SK-N-SH (cell line): ENCODE measurements at regions of chr2 and their contacts with region 1.

Region 1: DNA sequence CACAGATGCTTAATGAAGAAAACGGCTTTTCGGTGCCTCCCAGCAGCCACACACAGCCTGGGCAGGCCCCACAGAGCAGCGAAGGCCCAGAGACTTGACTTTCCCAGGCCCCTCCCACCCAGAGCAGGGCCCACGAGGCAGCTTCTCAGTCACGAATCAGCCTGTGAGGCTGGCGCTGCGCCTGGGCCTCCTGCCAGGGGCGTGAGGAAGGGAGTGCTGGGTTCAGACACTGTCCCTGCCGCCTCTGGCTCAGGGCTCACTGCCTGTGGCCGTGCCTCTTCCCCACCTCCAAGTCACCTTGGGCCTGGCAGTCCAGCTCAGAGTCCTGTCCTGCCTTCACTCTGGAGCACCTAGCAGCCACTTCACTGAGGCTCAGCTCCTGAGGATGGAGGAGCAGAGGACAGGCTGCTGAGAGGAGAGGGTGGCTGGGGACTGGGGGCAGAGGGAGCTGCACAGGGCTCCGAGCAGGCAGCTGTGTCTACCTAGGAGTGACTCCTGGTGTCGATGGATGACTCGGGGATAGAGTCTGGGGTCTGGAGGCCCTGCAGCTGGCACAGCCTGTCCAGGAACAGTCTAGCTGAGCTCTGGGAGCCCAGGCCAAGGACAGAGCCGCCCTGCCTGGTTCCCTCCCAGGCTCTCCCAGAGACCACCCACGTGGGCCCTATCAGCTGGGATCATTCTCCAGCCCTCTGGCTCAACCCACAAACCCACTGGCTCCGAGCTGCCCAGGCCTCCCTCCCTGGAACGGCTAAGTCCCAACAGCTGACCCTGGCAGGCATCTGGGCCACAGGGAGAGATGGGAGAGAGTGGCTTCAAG is 36.4 kb upstream of the FOSL2 start:
- DNase-seq: peak; percentile 90
- H3K4me3 ChIP-seq: no peak overlapping the region
- H3K27ac ChIP-seq: peak overlapping the region; percentile 60 to 97
- H3K4me1 ChIP-seq: peaks cover 13 to 40% of the 10 kb centered on the region in 2 experiments; a peak in 3 of 4 replicates
- H3K27me3 ChIP-seq: no peaks in the 10 kb centered on the region
- CTCF ChIP-seq: no peak
- EP300 ChIP-seq: no peak
- RAD21 ChIP-seq: no peak; the same call in 1 of the 2 replicates

Region 2: DNA sequence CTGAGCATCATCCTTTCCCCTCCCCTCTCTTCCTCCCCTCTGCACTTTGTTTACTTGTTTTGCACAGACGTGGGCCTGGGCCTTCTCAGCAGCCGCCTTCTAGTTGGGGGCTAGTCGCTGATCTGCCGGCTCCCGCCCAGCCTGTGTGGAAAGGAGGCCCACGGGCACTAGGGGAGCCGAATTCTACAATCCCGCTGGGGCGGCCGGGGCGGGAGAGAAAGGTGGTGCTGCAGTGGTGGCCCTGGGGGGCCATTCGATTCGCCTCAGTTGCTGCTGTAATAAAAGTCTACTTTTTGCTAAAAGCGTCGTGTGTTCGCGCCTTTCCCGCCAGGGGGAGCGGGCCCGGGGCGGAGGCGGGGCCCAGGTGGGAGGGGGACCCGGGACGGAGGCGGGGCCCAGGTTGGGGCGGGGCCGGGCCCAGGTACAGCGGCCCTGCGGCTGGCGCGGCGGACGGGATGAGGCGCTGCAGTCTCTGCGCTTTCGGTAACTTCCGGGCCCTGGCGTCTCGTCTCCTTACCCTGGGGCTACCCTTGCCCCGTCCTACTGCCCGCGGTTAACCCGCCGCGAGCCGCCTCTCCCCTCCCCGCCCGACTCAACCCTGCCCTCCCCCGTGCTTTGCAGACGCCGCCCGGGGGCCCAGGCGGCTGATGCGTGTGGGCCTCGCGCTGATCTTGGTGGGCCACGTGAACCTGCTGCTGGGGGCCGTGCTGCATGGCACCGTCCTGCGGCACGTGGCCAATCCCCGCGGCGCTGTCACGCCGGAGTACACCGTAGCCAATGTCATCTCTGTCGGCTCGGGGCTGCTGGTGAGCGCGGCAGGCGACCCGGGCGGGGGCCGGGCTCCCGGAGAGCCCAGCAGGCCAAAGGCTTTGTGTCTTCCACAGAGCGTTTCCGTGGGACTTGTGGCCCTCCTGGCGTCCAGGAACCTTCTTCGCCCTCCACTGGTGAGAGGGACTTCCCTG is 914.1 kb before region 1 on chr2 and contains the start of gene KRTCAP3:
- CTCF ChIA-PET with region 1: no interaction called
- POLR2A ChIA-PET with region 1: no interaction called
- DNase-seq: peak; percentile 58
- H3K4me3 ChIP-seq: no peak within 1 kb of the TSS
- H3K27ac ChIP-seq: no peak within 1 kb of the TSS; a peak in 1 of 4 replicates
- H3K4me1 ChIP-seq: no peaks in the 10 kb centered on the region
- H3K27me3 ChIP-seq: no peaks in the 10 kb centered on the region
- CTCF ChIP-seq: no peak
- EP300 ChIP-seq: no peak
- RAD21 ChIP-seq: no peak
- polyA plus RNA-seq, gene KRTCAP3: 3.6 and 4.1 TPM in 2 replicates

Region 3: DNA sequence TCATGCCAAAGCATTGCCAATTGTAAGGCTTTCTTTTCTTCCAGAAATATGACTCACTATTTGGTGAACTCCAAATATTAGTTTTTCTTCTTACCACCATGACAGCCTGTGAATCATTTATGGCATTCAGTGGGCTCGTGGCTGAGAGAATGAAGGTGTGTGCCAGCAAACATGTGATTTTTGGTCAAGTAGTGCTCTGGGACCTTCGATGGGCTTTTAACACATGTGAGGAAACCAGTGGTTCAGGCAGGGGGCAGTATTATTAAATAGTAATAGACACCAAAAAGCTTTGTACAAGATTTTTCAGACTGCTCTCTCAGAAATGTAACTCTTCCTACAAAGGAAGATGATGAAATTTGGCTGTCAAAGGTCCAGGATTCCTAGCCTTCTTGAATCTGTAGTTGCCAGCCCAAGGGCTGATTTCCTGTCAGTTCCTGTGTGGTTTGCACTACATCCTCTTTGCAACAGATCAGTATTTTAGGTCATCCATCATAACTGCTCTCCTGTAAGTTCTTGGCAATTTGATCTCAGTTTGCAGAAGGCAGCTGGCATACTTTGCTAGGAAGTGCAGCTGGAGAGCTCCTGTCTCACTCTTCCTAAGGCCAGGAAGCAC is 401.4 kb before region 1 on chr2:
- CTCF ChIA-PET with region 1: no interaction called
- POLR2A ChIA-PET with region 1: no interaction called
- DNase-seq: no peak
- H3K4me3 ChIP-seq: peak overlapping the region in 1 of 2 experiments; percentile 7; a peak in 1 of 4 replicates
- H3K27ac ChIP-seq: peak overlapping the region; percentile 82
- H3K4me1 ChIP-seq: peaks cover 12 to 45% of the 10 kb centered on the region in 2 experiments
- H3K27me3 ChIP-seq: no peaks in the 10 kb centered on the region
- CTCF ChIP-seq: peak; percentile 61
- EP300 ChIP-seq: peak; percentile 66 to 98; a peak in 3 of 4 replicates
- RAD21 ChIP-seq: peak; percentile 45

Region 4: GRCh38 chr2:28366496-28367282 is 10.4 kb after region 1 on chr2:
- CTCF ChIA-PET with region 1: no interaction called
- POLR2A ChIA-PET with region 1: interaction called, 15 read pairs
- DNase-seq: peak; percentile 76
- H3K4me3 ChIP-seq: no peak overlapping the region
- H3K27ac ChIP-seq: no peak overlapping the region; a peak in 1 of 4 replicates
- H3K4me1 ChIP-seq: peaks cover 4 to 36% of the 10 kb centered on the region in 2 experiments; a peak in 2 of 4 replicates
- H3K27me3 ChIP-seq: no peaks in the 10 kb centered on the region
- CTCF ChIP-seq: no peak
- EP300 ChIP-seq: no peak; a peak in 1 of 4 replicates
- RAD21 ChIP-seq: no peak

Region 5: GRCh38 chr2:28507806-28508764 is 151.8 kb after region 1 on chr2:
- CTCF ChIA-PET with region 1: no interaction called
- POLR2A ChIA-PET with region 1: no interaction called
- DNase-seq: no peak
- H3K4me3 ChIP-seq: no peak overlapping the region
- H3K27ac ChIP-seq: no peak overlapping the region
- H3K4me1 ChIP-seq: peaks cover 0 to 6% of the 10 kb centered on the region in 2 experiments; a peak in 1 of 4 replicates
- H3K27me3 ChIP-seq: peaks cover 21% of the 10 kb centered on the region; the same call in 1 of the 2 replicates
- CTCF ChIP-seq: no peak
- EP300 ChIP-seq: no peak
- RAD21 ChIP-seq: no peak